Activated CD4-positive, alpha-beta T cell treated with anti-CD3 and anti-CD28 coated beads for 36 hours (primary cell): ENCODE measurements at regions of chr11 and their contacts with region 1.

Region 1: DNA sequence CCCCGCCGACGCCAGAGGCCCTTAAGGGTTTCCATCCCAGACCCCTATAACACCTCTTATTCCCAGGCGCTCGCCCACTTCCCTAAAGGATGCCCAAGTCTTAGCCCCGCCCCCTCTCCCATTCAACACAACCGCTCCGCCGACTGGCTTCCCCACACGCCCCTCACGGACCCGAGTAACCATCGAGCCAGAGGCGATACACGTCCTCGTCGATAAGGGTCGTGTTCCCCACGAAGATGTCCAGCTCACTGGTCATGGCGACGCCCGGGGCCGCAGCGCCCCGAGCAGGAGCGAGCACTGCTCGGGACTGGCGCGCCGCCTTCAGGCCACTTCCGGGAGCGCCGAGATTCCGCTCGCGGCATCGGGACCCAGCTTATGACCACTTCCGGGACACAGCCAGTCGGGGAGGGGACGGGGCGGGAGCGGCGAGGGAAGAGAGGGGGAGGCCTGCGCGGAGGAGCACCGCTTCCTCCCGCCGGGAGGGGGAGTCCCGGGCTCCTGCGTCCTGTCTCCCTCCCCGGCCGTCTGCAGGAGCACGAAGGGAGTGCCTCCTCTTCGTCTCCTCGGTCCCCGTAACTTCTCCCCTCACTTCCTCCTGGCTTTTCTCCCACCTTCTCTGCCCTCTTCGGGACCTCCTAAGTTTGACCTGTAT is at the start of gene FIBP:
- DNase-seq: peak; percentile 99
- ATAC-seq: peak; percentile 68
- H3K4me3 Mint-ChIP-seq: peak within 1 kb of the TSS; percentile 94
- H3K27ac Mint-ChIP-seq: peak within 1 kb of the TSS; percentile 95
- H3K4me1 Mint-ChIP-seq: peaks cover 57% of the 10 kb centered on the region
- H3K27me3 Mint-ChIP-seq: no peaks in the 10 kb centered on the region
- total RNA-seq, gene FIBP: 95.4 to 121 TPM

Region 2: DNA sequence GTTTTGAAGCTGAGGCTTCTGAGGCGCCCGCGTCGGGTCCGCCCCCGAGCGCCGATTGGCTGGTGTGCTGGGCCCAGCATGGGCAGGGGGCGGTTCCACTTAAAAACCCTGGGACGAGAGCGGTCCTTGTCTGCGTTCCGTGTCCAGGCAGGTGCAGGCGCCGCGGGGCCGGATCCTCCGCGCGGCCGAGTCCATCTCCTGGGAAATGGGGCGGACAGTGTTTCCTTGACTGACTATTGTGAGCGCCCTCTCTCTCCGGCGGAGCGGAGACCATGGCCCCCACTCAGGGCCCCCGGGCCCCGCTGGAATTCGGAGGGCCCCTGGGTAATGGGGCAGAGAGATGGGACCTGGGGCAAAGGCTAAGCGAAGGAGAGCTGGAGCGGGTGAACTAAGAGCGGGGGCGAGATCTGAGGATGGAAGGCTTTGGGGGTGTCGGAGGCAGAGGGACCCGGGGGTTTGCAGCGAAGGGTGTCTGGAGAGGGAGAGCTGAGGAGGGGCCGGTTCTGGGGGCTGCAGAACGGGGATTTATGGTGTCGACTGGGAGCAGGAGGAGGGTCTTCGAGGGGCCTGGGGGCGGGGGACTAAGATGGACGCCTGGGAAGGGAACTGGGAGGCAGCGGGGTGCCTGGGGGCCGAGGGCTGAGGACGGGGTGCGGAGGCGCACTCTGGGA is 776.4 kb before region 1 on chr11 and contains the start of gene TM7SF2:
- CTCF ChIA-PET with region 1: no interaction called
- POLR2A ChIA-PET with region 1: no interaction called
- intact Hi-C with region 1: no loop called
- DNase-seq: peak; percentile 98
- ATAC-seq: peak; percentile 78
- H3K4me3 Mint-ChIP-seq: peak within 1 kb of the TSS; percentile 83
- H3K27ac Mint-ChIP-seq: peak within 1 kb of the TSS; percentile 74
- H3K4me1 Mint-ChIP-seq: peaks cover 50% of the 10 kb centered on the region
- H3K27me3 Mint-ChIP-seq: no peaks in the 10 kb centered on the region
- total RNA-seq, gene TM7SF2: 17.4 to 18.1 TPM

Region 3: GRCh38 chr11:65637794-65638317 is 250.4 kb before region 1 on chr11 and contains the start of gene SIPA1:
- CTCF ChIA-PET with region 1: interaction called, 4 read pairs
- POLR2A ChIA-PET with region 1: interaction called, 4 read pairs
- intact Hi-C with region 1: loop called in 1 of 2 experiments (anchors 1 kb)
- DNase-seq: peak; percentile 86
- ATAC-seq: peak; percentile 67
- H3K4me3 Mint-ChIP-seq: peak within 1 kb of the TSS; percentile 90
- H3K27ac Mint-ChIP-seq: peak within 1 kb of the TSS; percentile 95
- H3K4me1 Mint-ChIP-seq: peaks cover 42% of the 10 kb centered on the region
- H3K27me3 Mint-ChIP-seq: no peaks in the 10 kb centered on the region
- total RNA-seq, gene SIPA1: 181 to 202 TPM

Region 4: GRCh38 chr11:65779851-65780577 is 108.3 kb before region 1 on chr11:
- CTCF ChIA-PET with region 1: interaction called, 7 read pairs
- POLR2A ChIA-PET with region 1: interaction called, 3 read pairs
- intact Hi-C with region 1: loop called in 1 of 2 experiments (anchors 1 kb)
- DNase-seq: peak; percentile 94
- ATAC-seq: peak; percentile 81
- H3K4me3 Mint-ChIP-seq: peak overlapping the region; percentile 87
- H3K27ac Mint-ChIP-seq: peak overlapping the region; percentile 83
- H3K4me1 Mint-ChIP-seq: peaks cover 27% of the 10 kb centered on the region
- H3K27me3 Mint-ChIP-seq: peaks cover 10% of the 10 kb centered on the region

Region 5: DNA sequence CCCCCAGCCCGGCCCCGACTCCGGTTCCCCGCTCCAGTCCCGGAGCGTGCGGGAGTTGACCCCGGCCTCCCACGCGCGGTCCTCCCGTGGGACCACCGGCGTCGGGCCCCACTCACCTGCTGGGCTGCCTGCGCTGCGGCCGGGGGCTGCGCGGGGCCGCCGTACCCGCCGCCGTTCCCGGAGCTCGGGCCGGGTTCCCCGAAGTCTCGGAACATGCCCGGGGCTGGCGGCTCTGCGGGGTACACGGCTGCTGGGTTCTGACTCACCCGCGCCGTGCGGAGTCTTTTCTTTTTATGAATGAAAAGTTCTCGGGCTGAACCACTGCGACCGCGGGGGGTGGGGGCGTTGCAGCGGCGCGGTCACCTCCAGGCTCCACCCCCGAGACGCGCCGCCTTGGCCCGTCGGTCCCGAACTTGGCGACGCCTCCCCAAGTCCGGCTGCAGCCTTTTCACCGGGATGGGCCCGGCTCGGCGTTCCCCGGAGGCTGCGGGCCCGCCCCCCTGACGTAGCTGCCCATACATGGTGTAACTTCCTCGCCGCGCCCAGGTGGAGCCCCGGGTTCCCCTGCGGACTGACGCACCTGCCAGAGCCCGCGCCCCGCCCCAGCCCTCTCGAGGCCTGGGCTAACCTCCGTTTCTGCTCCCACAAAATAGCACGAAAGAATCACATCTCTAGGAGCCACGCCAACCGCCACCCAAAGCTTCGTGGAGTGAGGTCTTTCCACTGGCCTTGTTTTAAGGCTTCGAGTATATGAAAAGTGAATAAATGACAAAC is 12.0 kb after region 1 on chr11 and contains the start of gene FOSL1:
- CTCF ChIA-PET with region 1: interaction called, 113 read pairs
- POLR2A ChIA-PET with region 1: interaction called, 59 read pairs
- intact Hi-C with region 1: loop called (anchors 1 kb)
- DNase-seq: peak; percentile 98
- ATAC-seq: peak; percentile 85
- H3K4me3 Mint-ChIP-seq: peak within 1 kb of the TSS; percentile 75
- H3K27ac Mint-ChIP-seq: peak within 1 kb of the TSS; percentile 78
- H3K4me1 Mint-ChIP-seq: peaks cover 35% of the 10 kb centered on the region
- H3K27me3 Mint-ChIP-seq: peaks cover 4% of the 10 kb centered on the region
- total RNA-seq, gene FOSL1: 11.1 to 11.3 TPM

Region 6: GRCh38 chr11:65927904-65928397 is 39.7 kb after region 1 on chr11:
- CTCF ChIA-PET with region 1: interaction called, 13 read pairs
- POLR2A ChIA-PET with region 1: no interaction called
- intact Hi-C with region 1: loop called in 1 of 2 experiments (anchors 2 kb)
- DNase-seq: peak; percentile 88
- ATAC-seq: peak; percentile 94
- H3K4me3 Mint-ChIP-seq: peak overlapping the region; percentile 65
- H3K27ac Mint-ChIP-seq: peak overlapping the region; percentile 96
- H3K4me1 Mint-ChIP-seq: peaks cover 26% of the 10 kb centered on the region
- H3K27me3 Mint-ChIP-seq: no peaks in the 10 kb centered on the region

Region 7: DNA sequence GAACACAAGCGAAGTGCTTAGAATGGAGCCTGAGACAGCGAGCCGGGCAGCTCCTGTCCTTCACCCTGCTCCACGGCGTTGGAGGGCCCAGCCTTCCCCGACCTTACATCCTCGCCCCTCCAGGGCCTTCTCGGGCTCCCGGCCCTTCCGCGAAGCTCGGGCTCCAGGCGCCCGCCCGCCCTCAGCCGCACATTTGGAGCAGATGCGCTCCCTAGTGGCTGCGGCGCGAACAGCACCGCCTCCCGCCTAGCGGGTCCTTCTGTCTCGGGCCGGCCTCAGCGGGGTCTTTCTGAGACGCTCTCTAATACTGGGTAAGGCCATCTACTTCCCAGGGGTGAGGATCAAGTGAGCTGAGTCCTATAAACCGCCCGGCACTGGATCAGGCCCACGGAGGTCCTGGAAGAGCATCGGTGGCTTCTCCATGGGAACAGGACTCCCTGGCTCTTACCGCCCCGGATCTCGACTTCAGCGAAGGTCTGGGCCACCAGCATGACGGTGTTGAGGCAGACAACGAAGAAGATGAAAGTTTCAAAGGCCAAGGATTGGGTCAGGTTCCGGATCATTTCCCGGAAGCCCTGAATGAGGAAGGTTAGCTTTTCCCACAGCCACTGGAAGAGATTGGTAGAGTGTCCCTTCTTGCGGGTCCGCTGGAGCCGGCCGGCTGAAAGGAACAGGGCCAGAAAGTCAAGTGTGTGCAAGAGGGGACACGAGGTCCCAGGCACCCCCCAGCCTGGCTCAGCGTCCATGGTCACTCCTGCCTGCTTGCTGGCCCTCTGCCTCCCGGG is 134.3 kb after region 1 on chr11:
- CTCF ChIA-PET with region 1: interaction called, 5 read pairs
- POLR2A ChIA-PET with region 1: no interaction called
- intact Hi-C with region 1: loop called in 1 of 2 experiments (anchors 1 kb)
- DNase-seq: peak; percentile 89
- ATAC-seq: peak; percentile 94
- H3K4me3 Mint-ChIP-seq: no peak overlapping the region
- H3K27ac Mint-ChIP-seq: no peak overlapping the region
- H3K4me1 Mint-ChIP-seq: peaks cover 8% of the 10 kb centered on the region
- H3K27me3 Mint-ChIP-seq: peaks cover 7% of the 10 kb centered on the region

Region 8: GRCh38 chr11:66268283-66268951 is 380.1 kb after region 1 on chr11 and contains the start of gene RAB1B:
- CTCF ChIA-PET with region 1: interaction called, 3 read pairs
- POLR2A ChIA-PET with region 1: no interaction called
- intact Hi-C with region 1: loop called (anchors 2 to 5 kb)
- DNase-seq: peak; percentile 100
- ATAC-seq: peak; percentile 88
- H3K4me3 Mint-ChIP-seq: peak within 1 kb of the TSS; percentile 100
- H3K27ac Mint-ChIP-seq: peak within 1 kb of the TSS; percentile 97
- H3K4me1 Mint-ChIP-seq: peaks cover 28% of the 10 kb centered on the region
- H3K27me3 Mint-ChIP-seq: no peaks in the 10 kb centered on the region
- total RNA-seq, gene RAB1B: 114 to 147 TPM

Region 9: DNA sequence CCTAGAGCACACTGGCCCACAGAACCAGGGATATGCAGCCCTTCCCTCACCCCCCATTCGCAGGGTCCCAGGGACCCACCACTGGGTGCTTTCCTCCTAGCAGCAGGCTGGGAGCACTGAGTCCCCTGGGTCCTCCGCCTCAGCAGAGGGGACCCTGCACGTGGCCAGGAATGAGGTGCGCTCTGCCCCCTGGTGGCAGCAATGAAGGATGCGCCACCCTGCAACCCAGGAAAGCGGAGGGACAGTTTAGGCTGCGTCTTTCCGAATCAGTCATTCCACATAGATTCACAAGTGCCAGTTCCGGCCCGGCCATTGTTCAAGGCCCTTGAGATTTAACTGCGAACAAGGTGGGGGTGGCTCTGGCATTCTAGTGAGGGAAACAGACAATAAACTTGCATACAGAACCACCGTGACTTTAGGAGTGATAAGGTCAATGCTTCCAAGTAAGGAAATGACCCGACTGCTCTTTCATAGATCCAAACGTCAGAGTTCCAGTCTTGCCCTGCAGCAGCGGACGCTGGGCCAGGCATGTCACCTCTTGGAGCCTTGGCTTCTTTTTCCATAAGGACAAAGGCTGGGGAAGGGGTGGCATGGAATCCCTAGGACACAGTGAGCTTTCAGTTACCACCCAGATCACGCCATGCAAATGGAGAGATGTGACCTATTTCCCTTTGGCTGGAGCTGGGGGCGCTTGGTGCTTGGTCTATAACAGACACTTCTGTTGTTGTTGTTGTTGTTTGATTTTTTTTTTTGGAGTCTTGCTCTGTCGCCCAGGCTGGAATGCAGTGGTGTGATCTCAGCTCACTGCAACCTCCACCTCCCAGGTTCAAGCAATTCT is 440.2 kb after region 1 on chr11:
- CTCF ChIA-PET with region 1: no interaction called
- POLR2A ChIA-PET with region 1: no interaction called
- intact Hi-C with region 1: no loop called
- DNase-seq: peak; percentile 90
- ATAC-seq: peak; percentile 91
- H3K4me3 Mint-ChIP-seq: no peak overlapping the region
- H3K27ac Mint-ChIP-seq: peak overlapping the region; percentile 73
- H3K4me1 Mint-ChIP-seq: peaks cover 31% of the 10 kb centered on the region
- H3K27me3 Mint-ChIP-seq: no peaks in the 10 kb centered on the region

Region 10: GRCh38 chr11:66443602-66444001 is 555.3 kb after region 1 on chr11:
- CTCF ChIA-PET with region 1: no interaction called
- POLR2A ChIA-PET with region 1: no interaction called
- intact Hi-C with region 1: no loop called
- DNase-seq: no peak
- ATAC-seq: no peak
- H3K4me3 Mint-ChIP-seq: no peak overlapping the region
- H3K27ac Mint-ChIP-seq: no peak overlapping the region
- H3K4me1 Mint-ChIP-seq: no peaks in the 10 kb centered on the region
- H3K27me3 Mint-ChIP-seq: no peaks in the 10 kb centered on the region

Region 11: GRCh38 chr11:66509131-66509561 is 620.9 kb after region 1 on chr11:
- CTCF ChIA-PET with region 1: no interaction called
- POLR2A ChIA-PET with region 1: no interaction called
- intact Hi-C with region 1: no loop called
- DNase-seq: peak; percentile 15
- ATAC-seq: peak; percentile 28
- H3K4me3 Mint-ChIP-seq: no peak overlapping the region
- H3K27ac Mint-ChIP-seq: no peak overlapping the region
- H3K4me1 Mint-ChIP-seq: peaks cover 10% of the 10 kb centered on the region
- H3K27me3 Mint-ChIP-seq: no peaks in the 10 kb centered on the region